ENCODE measurements at regions of chr10 and their contacts with region 1.

Region 1: GRCh38 chr10:80144067-80144695 is 11.7 kb downstream of the PLAC9 start:
- DNase-seq: peak; percentile 45
- ATAC-seq: peak; percentile 65
- H3K4me3 Mint-ChIP-seq: peak overlapping the region; percentile 68
- H3K27ac Mint-ChIP-seq: peak overlapping the region; percentile 65
- H3K4me1 Mint-ChIP-seq: peaks cover 21% of the 10 kb centered on the region
- H3K27me3 Mint-ChIP-seq: peaks cover 6% of the 10 kb centered on the region

Region 2: GRCh38 chr10:80078448-80079311 is 65.5 kb before region 1 on chr10 and contains the start of gene TMEM254:
- CTCF ChIA-PET with region 1: interaction called, 12 read pairs
- DNase-seq: peak; percentile 94
- ATAC-seq: peak; percentile 89
- H3K4me3 Mint-ChIP-seq: peak within 1 kb of the TSS; percentile 98
- H3K27ac Mint-ChIP-seq: peak within 1 kb of the TSS; percentile 95
- H3K4me1 Mint-ChIP-seq: peaks cover 24% of the 10 kb centered on the region
- H3K27me3 Mint-ChIP-seq: no peaks in the 10 kb centered on the region
- total RNA-seq, gene TMEM254: 12.4 to 13.9 TPM

Region 3: GRCh38 chr10:80187465-80188409 is 43.6 kb after region 1 on chr10:
- CTCF ChIA-PET with region 1: interaction called, 16 read pairs
- DNase-seq: peak; percentile 94
- ATAC-seq: peak; percentile 90
- H3K4me3 Mint-ChIP-seq: peak overlapping the region; percentile 63
- H3K27ac Mint-ChIP-seq: peak overlapping the region; percentile 94
- H3K4me1 Mint-ChIP-seq: peaks cover 67% of the 10 kb centered on the region
- H3K27me3 Mint-ChIP-seq: no peaks in the 10 kb centered on the region

Region 4: GRCh38 chr10:80211786-80212185 is 67.6 kb after region 1 on chr10:
- CTCF ChIA-PET with region 1: interaction called, 137 read pairs
- DNase-seq: no peak
- ATAC-seq: no peak
- H3K4me3 Mint-ChIP-seq: no peak overlapping the region
- H3K27ac Mint-ChIP-seq: peak overlapping the region; percentile 1
- H3K4me1 Mint-ChIP-seq: peaks cover 23% of the 10 kb centered on the region
- H3K27me3 Mint-ChIP-seq: no peaks in the 10 kb centered on the region

Region 5: DNA sequence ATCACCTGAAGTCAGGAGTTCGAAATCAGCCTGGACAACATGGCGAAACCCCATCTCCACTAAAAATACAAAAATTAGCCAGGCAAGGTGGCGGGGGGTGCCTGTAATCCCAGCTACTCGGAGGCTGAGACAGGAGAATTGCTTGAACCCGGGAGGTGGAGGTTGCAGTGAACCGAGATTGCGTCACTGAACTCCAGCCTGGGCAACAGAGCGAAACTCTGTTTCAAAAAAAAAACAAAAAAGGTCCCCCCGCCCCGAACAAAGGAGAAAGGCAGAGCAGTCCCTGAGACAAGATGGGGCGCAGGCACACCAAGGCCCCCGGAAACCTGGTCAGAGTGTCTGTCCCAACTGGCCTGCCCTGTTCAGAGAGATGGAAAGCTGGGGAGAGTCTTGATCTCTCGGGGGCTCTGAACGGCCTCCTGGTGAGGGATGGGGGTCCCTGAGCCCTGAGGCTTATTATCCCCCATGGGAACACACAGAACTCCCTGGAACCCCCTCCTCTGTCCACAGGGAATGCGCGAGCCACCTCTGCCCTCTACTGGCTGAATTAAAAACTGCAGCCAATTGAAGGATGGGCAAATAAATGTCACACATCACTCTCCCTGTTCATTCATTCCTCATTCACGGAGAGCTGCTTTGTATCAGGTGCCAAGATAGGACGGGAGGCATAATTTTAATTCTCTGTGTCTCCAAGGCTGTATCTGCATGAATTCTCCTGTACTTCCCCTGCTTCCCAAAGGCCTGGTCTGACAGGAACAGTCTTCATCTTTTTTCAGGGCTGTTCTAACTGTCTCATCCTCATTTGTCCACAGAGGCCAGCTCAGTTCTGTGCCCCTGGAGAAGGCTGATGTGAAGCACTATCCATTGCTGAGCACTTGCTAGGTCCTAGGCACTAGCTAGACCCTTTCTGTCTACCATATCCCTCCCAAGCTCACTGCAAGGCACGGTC is 116.4 kb after region 1 on chr10:
- CTCF ChIA-PET with region 1: interaction called, 43 read pairs
- DNase-seq: peak; percentile 52
- ATAC-seq: peak; percentile 66
- H3K4me3 Mint-ChIP-seq: no peak overlapping the region
- H3K27ac Mint-ChIP-seq: no peak overlapping the region
- H3K4me1 Mint-ChIP-seq: no peaks in the 10 kb centered on the region
- H3K27me3 Mint-ChIP-seq: peaks cover 24% of the 10 kb centered on the region

Measured in activated CD8-positive, alpha-beta memory T cell treated with anti-CD3 and anti-CD28 coated beads, Interleukin-2, amount 10 ng/mL, durations not matched to agents 7 days and 5 days (primary cell).